Calu3 (cell line): ENCODE measurements at regions of chr17 and their contacts with region 1.

Region 1: GRCh38 chr17:27975146-27976011 is 67.1 kb upstream of the NLK start:
- DNase-seq: no peak
- H3K4me3 Mint-ChIP-seq: no peak overlapping the region
- H3K27ac Mint-ChIP-seq: no peak overlapping the region
- H3K4me1 Mint-ChIP-seq: no peaks in the 10 kb centered on the region
- H3K27me3 Mint-ChIP-seq: peaks cover 6% of the 10 kb centered on the region
- CTCF ChIP-seq: no peak

Region 2: GRCh38 chr17:28133562-28133970 is 158.2 kb after region 1 on chr17:
- CTCF ChIA-PET with region 1: interaction called, 5 read pairs
- intact Hi-C with region 1: loop called (anchors 10 kb)
- DNase-seq: no peak
- H3K4me3 Mint-ChIP-seq: no peak overlapping the region
- H3K27ac Mint-ChIP-seq: peak overlapping the region; percentile 79
- H3K4me1 Mint-ChIP-seq: peaks cover 11% of the 10 kb centered on the region
- H3K27me3 Mint-ChIP-seq: no peaks in the 10 kb centered on the region
- CTCF ChIP-seq: no peak